Common myeloid progenitor, CD34-positive (primary cell): ENCODE measurements at regions of chr16 and their contacts with region 1.

Region 1: GRCh38 chr16:67749436-67750078 is 30.4 kb upstream of the GFOD2 start:
- DNase-seq: no peak
- H3K4me3 ChIP-seq: no peak overlapping the region
- H3K27ac ChIP-seq: no peak overlapping the region
- H3K4me1 ChIP-seq: no peaks in the 10 kb centered on the region
- H3K27me3 ChIP-seq: no peaks in the 10 kb centered on the region

Region 2: DNA sequence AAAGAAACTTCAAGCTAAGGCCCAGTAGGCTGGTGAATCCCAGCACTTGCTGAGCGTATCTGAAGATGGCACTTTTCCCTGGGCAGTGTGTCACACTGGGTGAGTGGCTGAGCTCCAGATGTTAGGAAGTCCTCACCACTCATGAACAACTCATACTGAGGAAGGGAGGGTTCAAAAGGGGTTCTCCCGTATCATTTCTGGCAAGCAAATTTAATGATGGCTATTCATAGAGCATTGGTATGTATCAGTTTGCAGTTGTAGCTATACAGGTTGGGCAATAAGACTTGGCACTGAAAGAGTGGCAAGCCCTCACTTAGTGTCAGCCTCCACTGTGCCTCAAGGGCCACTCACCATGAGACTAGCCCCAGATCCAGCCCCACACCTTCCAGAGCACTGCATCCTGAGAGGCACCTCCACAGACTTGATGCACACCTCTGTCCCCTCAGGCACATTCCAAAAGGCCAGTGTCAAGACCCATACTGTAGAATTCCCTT is 41.1 kb before region 1 on chr16:
- CTCF ChIA-PET with region 1: no interaction called
- POLR2A ChIA-PET with region 1: no interaction called
- DNase-seq: no peak
- H3K4me3 ChIP-seq: no peak overlapping the region
- H3K27ac ChIP-seq: no peak overlapping the region
- H3K4me1 ChIP-seq: no peaks in the 10 kb centered on the region
- H3K27me3 ChIP-seq: no peaks in the 10 kb centered on the region

Region 3: GRCh38 chr16:67760206-67760955 is 10.8 kb after region 1 on chr16:
- CTCF ChIA-PET with region 1: interaction called, 11 read pairs
- POLR2A ChIA-PET with region 1: no interaction called
- DNase-seq: peak; percentile 58 to 89 (median 77)
- H3K4me3 ChIP-seq: no peak overlapping the region
- H3K27ac ChIP-seq: peak overlapping the region; percentile 20 to 26
- H3K4me1 ChIP-seq: peaks cover 5 to 14% (median 12%) of the 10 kb centered on the region in 4 experiments
- H3K27me3 ChIP-seq: no peaks in the 10 kb centered on the region